Vagina (tissue), 2 donors: ENCODE measurements at regions of chr2 and their contacts with region 1.

Region 1: DNA sequence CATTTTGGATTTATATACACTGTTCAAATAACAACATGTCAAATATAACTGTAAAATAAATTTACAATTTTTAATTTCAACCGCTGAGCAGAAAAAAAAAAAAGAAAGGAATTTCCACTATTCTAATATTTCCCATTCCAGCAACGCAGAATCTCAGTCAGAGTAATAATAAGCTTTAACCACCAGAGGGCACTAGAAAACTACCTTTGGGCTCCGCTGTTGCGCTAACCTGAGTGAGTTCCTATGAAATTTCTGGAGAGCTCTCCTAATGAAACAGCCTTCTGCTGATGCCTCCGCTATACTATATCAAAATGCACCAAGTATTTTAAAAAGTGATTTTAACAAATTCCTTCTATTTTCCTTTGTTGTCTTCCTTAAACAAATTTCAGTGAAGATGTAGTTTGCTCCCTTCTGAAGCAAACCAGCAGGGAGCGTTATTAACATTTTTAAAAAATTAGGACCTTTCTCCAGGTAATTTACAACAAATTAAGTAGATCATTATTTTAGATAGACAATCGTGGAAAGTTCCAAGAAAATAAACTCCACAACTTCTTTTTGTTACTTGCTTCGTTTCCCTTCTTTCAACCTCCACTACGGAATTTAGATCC is 23.0 kb downstream of the ERMN start:
- DNase-seq: no peak
- H3K4me3 ChIP-seq: no peak overlapping the region
- H3K27ac ChIP-seq: no peak overlapping the region
- H3K4me1 ChIP-seq: no peaks in the 10 kb centered on the region
- H3K27me3 ChIP-seq: no peaks in the 10 kb centered on the region
- CTCF ChIP-seq: peak; percentile 26 to 75 (median 56)
- POLR2A ChIP-seq: no peak

Region 2: DNA sequence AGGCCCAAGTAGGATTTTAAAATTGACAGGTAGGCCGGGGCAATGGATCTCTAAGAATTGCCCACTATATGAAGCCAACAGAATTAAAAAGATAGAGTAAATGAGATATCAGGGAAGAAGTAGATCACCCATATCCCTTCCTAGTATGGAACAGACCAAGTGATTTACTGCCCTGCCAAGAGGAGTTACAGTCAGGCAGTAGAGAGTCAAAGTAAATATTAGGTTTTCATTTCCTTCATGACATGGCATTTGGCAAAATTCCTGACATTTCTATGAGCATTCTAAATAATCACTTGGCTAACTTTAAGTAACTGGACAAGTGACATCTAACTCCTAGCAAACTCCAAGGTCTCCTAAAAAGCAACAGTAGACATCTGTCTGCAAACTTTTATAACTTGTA is 11.6 kb before region 1 on chr2:
- intact Hi-C with region 1: no loop called
- DNase-seq: no peak
- H3K4me3 ChIP-seq: no peak overlapping the region
- H3K27ac ChIP-seq: no peak overlapping the region
- H3K4me1 ChIP-seq: no peaks in the 10 kb centered on the region
- H3K27me3 ChIP-seq: no peaks in the 10 kb centered on the region
- CTCF ChIP-seq: no peak
- POLR2A ChIP-seq: no peak

Region 3: DNA sequence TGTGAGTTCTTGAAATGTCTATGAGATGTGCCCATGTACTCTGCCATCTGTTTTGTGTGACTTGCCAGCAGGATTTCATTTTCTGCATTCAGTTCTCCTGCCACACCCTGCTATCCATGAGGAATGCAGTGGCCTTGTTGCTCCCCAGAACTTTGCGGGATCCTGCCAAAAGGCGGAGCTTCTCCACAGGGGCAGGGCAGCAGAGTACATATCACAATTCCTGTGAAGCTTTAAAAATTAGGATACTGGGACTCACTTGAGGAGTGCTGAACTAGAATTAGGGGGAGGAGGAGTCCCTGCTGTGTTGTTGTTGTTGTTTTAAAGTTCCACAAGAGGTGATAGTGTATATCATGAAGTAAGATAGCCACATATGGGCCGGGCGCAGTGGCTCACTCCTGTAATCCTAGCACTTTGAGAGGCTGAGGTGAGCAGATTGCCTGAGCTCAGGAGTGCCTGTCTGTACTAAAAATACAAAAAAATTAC is 1742.2 kb after region 1 on chr2:
- intact Hi-C with region 1: loop called (anchors 5 kb)
- DNase-seq: no peak
- H3K4me3 ChIP-seq: no peak overlapping the region
- H3K27ac ChIP-seq: peak overlapping the region; percentile 17
- H3K4me1 ChIP-seq: peaks cover 67% of the 10 kb centered on the region
- H3K27me3 ChIP-seq: no peaks in the 10 kb centered on the region
- CTCF ChIP-seq: no peak
- POLR2A ChIP-seq: no peak